Natural killer cell (primary cell): ENCODE measurements at regions of chr14 and their contacts with region 1.

Region 1: DNA sequence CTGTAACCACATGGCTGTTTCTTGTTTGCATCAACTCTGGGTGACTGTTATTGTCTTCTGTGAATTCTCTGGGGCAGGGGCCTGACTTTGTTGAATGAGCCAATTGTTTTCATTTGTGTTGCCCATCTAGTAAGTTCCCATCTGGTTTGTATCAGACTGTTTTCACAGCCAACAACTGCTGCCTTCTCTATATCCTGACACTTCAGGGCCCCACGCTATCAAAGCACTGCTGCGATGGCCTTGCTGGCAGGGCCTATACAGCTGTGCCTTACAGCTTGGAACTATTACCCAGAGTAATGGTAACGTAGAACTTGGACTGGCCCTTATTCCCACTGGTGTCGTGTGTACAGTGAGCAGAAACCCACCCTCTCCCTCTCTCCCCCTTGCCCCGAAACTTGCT is 104.3 kb upstream of the DACT1 start:
- DNase-seq: no peak
- ATAC-seq: no peak
- H3K4me3 ChIP-seq: no peak overlapping the region
- H3K4me3 Mint-ChIP-seq: no peak overlapping the region
- H3K27ac ChIP-seq: no peak overlapping the region
- H3K27ac Mint-ChIP-seq: peak overlapping the region in 1 of 2 donors; percentile 47
- H3K4me1 ChIP-seq: no peaks in the 10 kb centered on the region
- H3K4me1 Mint-ChIP-seq: peaks cover 0 to 8% of the 10 kb centered on the region in 2 donors
- H3K27me3 ChIP-seq: no peaks in the 10 kb centered on the region
- H3K27me3 Mint-ChIP-seq: no peaks in the 10 kb centered on the region
- CTCF ChIP-seq: no peak

Region 2: GRCh38 chr14:57871459-57872080 is 661.9 kb before region 1 on chr14:
- intact Hi-C with region 1: no loop called
- DNase-seq: no peak
- ATAC-seq: no peak
- H3K4me3 ChIP-seq: no peak overlapping the region
- H3K4me3 Mint-ChIP-seq: no peak overlapping the region
- H3K27ac ChIP-seq: no peak overlapping the region
- H3K27ac Mint-ChIP-seq: no peak overlapping the region
- H3K4me1 ChIP-seq: no peaks in the 10 kb centered on the region
- H3K4me1 Mint-ChIP-seq: no peaks in the 10 kb centered on the region
- H3K27me3 ChIP-seq: peaks cover 2% of the 10 kb centered on the region
- H3K27me3 Mint-ChIP-seq: peaks cover 0 to 8% of the 10 kb centered on the region in 2 donors
- CTCF ChIP-seq: no peak

Region 3: DNA sequence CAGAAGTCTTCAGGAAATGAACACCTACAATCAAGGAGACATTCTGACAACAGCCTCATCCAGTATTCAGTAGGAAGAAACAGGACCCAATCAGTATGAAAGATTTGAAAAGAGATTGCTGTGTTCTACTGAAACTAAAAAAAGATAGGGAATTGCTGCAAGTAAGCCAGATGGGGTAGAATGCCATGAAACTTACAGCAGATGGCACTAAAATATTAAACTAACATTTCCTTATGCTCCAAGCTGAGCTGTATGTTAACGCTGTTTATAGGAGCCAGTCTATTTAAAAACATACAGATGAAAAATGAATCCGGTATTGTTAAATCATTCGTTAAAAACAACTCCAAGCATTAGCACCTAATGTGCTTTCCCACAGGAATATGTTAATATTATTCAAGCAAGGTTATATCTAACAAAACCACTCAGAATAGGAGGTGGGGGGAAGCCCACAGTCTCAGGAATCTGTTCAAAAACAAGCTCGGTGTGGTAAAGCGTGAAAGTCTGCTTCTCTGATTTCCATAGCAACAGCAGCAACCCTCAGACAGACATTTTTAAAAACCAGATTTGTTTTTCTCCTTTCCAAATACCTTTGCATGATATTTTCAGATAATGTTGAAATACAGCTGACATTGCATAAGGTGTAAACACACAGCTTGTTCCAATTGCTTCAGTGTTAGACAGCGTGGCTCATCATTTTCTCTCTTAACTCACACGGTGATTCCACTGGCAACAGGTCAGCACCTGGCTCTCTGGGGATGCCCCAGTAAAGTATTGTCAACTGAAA is 1174.5 kb after region 1 on chr14:
- intact Hi-C with region 1: loop called (anchors 10 kb)
- DNase-seq: no peak
- ATAC-seq: no peak
- H3K4me3 ChIP-seq: no peak overlapping the region
- H3K4me3 Mint-ChIP-seq: no peak overlapping the region
- H3K27ac ChIP-seq: no peak overlapping the region
- H3K27ac Mint-ChIP-seq: no peak overlapping the region
- H3K4me1 ChIP-seq: no peaks in the 10 kb centered on the region
- H3K4me1 Mint-ChIP-seq: no peaks in the 10 kb centered on the region
- H3K27me3 ChIP-seq: no peaks in the 10 kb centered on the region
- H3K27me3 Mint-ChIP-seq: peaks cover 0 to 3% of the 10 kb centered on the region in 2 donors
- CTCF ChIP-seq: no peak